ENCODE measurements at regions of chr1 and their contacts with region 1.

Region 1: DNA sequence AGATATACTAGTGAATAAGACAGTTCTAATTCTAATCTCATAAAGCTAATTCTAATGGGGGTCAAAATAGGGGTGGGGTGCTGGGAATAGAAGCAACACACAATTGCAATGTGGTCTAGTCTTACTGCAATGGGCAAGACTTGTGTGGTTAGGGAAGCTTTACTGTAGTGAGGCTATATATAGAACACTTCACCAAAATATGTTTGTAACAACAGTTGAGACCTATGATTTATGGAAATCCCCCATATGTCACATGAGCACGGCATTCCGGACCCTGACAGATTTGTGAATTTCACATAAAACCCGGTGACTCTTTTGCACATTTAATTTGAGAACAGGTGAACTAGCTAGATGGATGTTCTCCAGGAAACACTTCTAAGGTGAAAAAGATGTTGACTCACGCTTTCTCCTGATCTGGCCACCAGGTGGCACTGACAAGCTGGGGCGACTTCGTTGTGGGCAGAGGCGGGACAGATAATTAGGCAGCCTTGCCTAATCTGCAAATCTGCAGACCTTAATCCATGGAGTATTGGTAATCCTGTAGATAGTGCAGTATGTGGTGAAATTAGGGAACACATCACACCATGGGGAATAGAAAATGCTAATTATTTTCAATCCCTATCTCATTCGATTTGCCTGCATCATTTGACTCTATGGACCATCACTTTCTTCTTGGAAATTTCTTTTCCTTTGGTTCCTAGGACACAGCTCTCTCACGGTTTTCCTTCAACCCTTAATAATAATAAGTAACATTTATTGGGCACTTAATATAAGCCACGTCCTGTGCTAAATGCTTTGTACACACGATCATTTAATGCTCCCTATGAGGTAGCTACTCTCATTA is 37.7 kb downstream of the KIAA0040 start:
- DNase-seq: peak; percentile 76
- H3K4me3 Mint-ChIP-seq: no peak overlapping the region
- H3K27ac Mint-ChIP-seq: no peak overlapping the region
- H3K4me1 Mint-ChIP-seq: peaks cover 9% of the 10 kb centered on the region
- H3K27me3 Mint-ChIP-seq: peaks cover 39% of the 10 kb centered on the region

Region 2: DNA sequence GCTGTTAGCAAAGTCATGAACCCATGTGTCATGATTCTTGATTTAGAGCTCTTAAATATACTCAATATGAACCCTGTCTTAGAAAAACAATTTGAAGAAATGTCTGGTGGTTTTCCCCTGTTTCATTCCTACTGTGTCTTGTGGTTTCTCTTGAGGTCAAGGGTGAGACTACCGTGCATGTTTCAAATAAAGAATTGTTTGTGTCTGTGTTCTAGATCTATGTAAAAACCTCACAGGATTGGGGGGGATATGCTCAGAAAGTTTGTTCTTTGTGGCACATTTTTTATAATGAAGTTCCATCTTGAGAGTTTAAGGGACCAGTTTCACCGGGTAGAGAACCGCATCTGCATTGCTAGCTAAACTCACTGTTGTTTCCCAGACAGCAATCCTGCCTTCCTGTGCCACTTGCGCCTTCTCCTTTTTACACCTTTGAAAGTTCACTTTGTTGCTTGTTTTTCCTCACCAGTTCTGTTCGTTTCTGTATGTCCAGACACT is 186.1 kb before region 1 on chr1:
- CTCF ChIA-PET with region 1: no interaction called
- POLR2A ChIA-PET with region 1: no interaction called
- DNase-seq: no peak
- H3K4me3 Mint-ChIP-seq: peak overlapping the region; percentile 62
- H3K27ac Mint-ChIP-seq: peak overlapping the region; percentile 93
- H3K4me1 Mint-ChIP-seq: peaks cover 77% of the 10 kb centered on the region
- H3K27me3 Mint-ChIP-seq: no peaks in the 10 kb centered on the region

Region 3: GRCh38 chr1:175043824-175044223 is 111.0 kb before region 1 on chr1:
- CTCF ChIA-PET with region 1: no interaction called
- POLR2A ChIA-PET with region 1: no interaction called
- DNase-seq: no peak
- H3K4me3 Mint-ChIP-seq: no peak overlapping the region
- H3K27ac Mint-ChIP-seq: no peak overlapping the region
- H3K4me1 Mint-ChIP-seq: no peaks in the 10 kb centered on the region
- H3K27me3 Mint-ChIP-seq: peaks cover 26% of the 10 kb centered on the region

Region 4: GRCh38 chr1:175192630-175193526 is 38.0 kb after region 1 on chr1 and contains the start of gene KIAA0040:
- CTCF ChIA-PET with region 1: interaction called, 44 read pairs
- POLR2A ChIA-PET with region 1: interaction called, 7 read pairs
- DNase-seq: peak; percentile 65
- H3K4me3 Mint-ChIP-seq: peak within 1 kb of the TSS; percentile 95
- H3K27ac Mint-ChIP-seq: peak within 1 kb of the TSS; percentile 93
- H3K4me1 Mint-ChIP-seq: peaks cover 52% of the 10 kb centered on the region
- H3K27me3 Mint-ChIP-seq: no peaks in the 10 kb centered on the region
- total RNA-seq, gene KIAA0040: 79.4 to 80.2 TPM

Region 5: DNA sequence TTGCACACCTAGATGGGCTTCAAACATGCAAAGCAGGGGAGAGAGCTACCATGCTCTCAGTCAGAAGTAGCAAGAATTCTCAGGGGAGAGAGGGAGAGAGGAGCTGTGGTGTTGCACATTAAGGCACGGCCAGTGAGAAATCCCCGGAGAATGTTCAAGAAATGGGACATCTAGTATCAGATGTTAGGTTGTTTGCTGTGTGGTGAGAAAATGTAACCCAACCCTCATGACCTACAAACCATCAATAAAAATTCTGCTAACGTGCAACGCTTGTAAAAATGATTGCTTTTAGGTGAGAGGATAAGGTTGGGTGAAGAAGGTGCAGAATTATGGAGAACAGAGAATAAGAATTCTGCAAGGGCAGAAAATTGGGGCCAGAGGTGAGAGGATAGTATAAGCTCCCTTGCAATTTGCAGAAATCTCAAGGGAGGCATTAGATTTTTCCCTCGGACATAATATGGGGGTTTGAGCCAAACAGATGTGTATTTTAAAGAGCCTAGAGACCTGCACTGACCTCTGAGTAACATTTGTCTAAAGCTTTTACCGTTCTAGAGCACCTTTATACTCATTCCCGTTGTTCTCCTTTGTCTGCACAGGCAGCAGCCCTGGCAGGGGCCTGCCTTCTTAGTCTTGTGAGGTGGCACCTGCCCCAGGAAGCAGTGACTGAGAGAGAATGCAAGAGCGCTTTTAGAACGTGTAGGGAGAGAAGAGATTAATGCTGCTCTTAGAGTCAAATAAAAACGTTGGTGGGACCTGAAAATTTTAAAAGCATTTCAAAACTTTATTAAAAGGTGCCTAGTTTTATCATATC is 63.1 kb after region 1 on chr1:
- CTCF ChIA-PET with region 1: interaction called, 10 read pairs
- POLR2A ChIA-PET with region 1: no interaction called
- DNase-seq: no peak
- H3K4me3 Mint-ChIP-seq: no peak overlapping the region
- H3K27ac Mint-ChIP-seq: no peak overlapping the region
- H3K4me1 Mint-ChIP-seq: peaks cover 1% of the 10 kb centered on the region
- H3K27me3 Mint-ChIP-seq: no peaks in the 10 kb centered on the region

Region 6: GRCh38 chr1:175319418-175320230 is 164.8 kb after region 1 on chr1:
- CTCF ChIA-PET with region 1: interaction called, 238 read pairs
- POLR2A ChIA-PET with region 1: interaction called, 14 read pairs
- DNase-seq: peak; percentile 72
- H3K4me3 Mint-ChIP-seq: no peak overlapping the region
- H3K27ac Mint-ChIP-seq: no peak overlapping the region
- H3K4me1 Mint-ChIP-seq: peaks cover 10% of the 10 kb centered on the region
- H3K27me3 Mint-ChIP-seq: peaks cover 8% of the 10 kb centered on the region

Region 7: GRCh38 chr1:175338387-175339135 is 183.7 kb after region 1 on chr1:
- CTCF ChIA-PET with region 1: interaction called, 36 read pairs
- POLR2A ChIA-PET with region 1: no interaction called
- DNase-seq: peak; percentile 55
- H3K4me3 Mint-ChIP-seq: no peak overlapping the region
- H3K27ac Mint-ChIP-seq: no peak overlapping the region
- H3K4me1 Mint-ChIP-seq: no peaks in the 10 kb centered on the region
- H3K27me3 Mint-ChIP-seq: peaks cover 20% of the 10 kb centered on the region